Natural killer cell (primary cell): ENCODE measurements at regions of chr12 and their contacts with region 1.

Region 1: GRCh38 chr12:68040450-68041075 is 51.3 kb downstream of the IFNG-AS1 start:
- DNase-seq: peak; percentile 57 to 87
- ATAC-seq: peak; percentile 77 to 80 (median 78)
- H3K4me3 ChIP-seq: no peak overlapping the region
- H3K4me3 Mint-ChIP-seq: no peak overlapping the region
- H3K27ac ChIP-seq: no peak overlapping the region
- H3K27ac Mint-ChIP-seq: peak overlapping the region in 1 of 2 donors; percentile 40
- H3K4me1 ChIP-seq: peaks cover 24% of the 10 kb centered on the region
- H3K4me1 Mint-ChIP-seq: peaks cover 31 to 41% of the 10 kb centered on the region in 2 donors
- H3K27me3 ChIP-seq: no peaks in the 10 kb centered on the region
- H3K27me3 Mint-ChIP-seq: peaks cover 8 to 10% of the 10 kb centered on the region in 2 donors
- CTCF ChIP-seq: peak; percentile 94

Region 2: GRCh38 chr12:68223083-68223747 is 182.7 kb after region 1 on chr12:
- intact Hi-C with region 1: loop called (anchors 1 kb)
- DNase-seq: peak; percentile 53 to 91
- ATAC-seq: peak; percentile 95 to 100 (median 99)
- H3K4me3 ChIP-seq: no peak overlapping the region
- H3K4me3 Mint-ChIP-seq: no peak overlapping the region
- H3K27ac ChIP-seq: no peak overlapping the region
- H3K27ac Mint-ChIP-seq: peak overlapping the region in 1 of 2 donors; percentile 32
- H3K4me1 ChIP-seq: peaks cover 4% of the 10 kb centered on the region
- H3K4me1 Mint-ChIP-seq: peaks cover 6 to 7% of the 10 kb centered on the region in 2 donors
- H3K27me3 ChIP-seq: no peaks in the 10 kb centered on the region
- H3K27me3 Mint-ChIP-seq: peaks cover 13 to 27% of the 10 kb centered on the region in 2 donors
- CTCF ChIP-seq: peak; percentile 80